MCF 10A (cell line): ENCODE measurements at regions of chr2 and their contacts with region 1.

Region 1: GRCh38 chr2:219229305-219230058 is at the starts of genes ANKZF1 and ATG9A:
- DNase-seq: peak; percentile 100
- H3K4me3 Mint-ChIP-seq: peak within 1 kb of the TSS; percentile 100
- H3K27ac Mint-ChIP-seq: peak within 1 kb of the TSS; percentile 99
- H3K4me1 Mint-ChIP-seq: peaks cover 12% of the 10 kb centered on the region
- H3K27me3 Mint-ChIP-seq: no peaks in the 10 kb centered on the region
- CTCF ChIP-seq: no peak
- total RNA-seq, gene ANKZF1: 45.5 and 45.6 TPM in 2 replicates
- total RNA-seq, gene ATG9A: 52.1 and 60.8 TPM in 2 replicates

Region 2: GRCh38 chr2:219160186-219161017 is 69.1 kb before region 1 on chr2 and contains the start of gene NHEJ1:
- CTCF ChIA-PET with region 1: interaction called, 12 read pairs
- POLR2A ChIA-PET with region 1: interaction called, 4 read pairs
- intact Hi-C with region 1: no loop called
- DNase-seq: peak; percentile 95
- H3K4me3 Mint-ChIP-seq: peak within 1 kb of the TSS; percentile 77
- H3K27ac Mint-ChIP-seq: peak within 1 kb of the TSS; percentile 37
- H3K4me1 Mint-ChIP-seq: peaks cover 14% of the 10 kb centered on the region
- H3K27me3 Mint-ChIP-seq: no peaks in the 10 kb centered on the region
- CTCF ChIP-seq: peak; percentile 96
- total RNA-seq, gene NHEJ1: 7.5 and 11.5 TPM in 2 replicates

Region 3: DNA sequence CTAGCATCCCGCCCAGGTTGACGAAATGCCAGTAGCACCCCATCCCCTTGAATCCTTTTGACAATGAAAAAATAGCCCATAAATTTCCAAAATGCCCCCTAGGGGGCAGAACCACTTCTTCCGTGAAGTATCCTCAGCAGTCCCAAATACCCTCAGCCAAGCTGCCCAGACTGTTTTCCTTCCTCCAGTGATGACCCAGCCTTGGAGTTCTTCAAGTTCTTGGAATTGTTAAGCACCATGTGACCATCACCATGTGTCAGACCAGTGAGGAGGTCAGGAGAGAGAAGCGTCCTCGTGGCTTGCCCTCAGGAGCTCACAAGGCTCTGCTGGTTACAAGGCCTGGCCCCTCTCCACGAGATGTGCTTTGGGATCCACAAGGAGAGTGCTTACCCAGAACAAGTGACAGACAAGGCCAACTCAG is 58.2 kb before region 1 on chr2:
- CTCF ChIA-PET with region 1: interaction called, 8 read pairs
- POLR2A ChIA-PET with region 1: interaction called, 93 read pairs
- intact Hi-C with region 1: no loop called
- DNase-seq: peak; percentile 57
- H3K4me3 Mint-ChIP-seq: no peak overlapping the region
- H3K27ac Mint-ChIP-seq: no peak overlapping the region
- H3K4me1 Mint-ChIP-seq: peaks cover 8% of the 10 kb centered on the region
- H3K27me3 Mint-ChIP-seq: no peaks in the 10 kb centered on the region
- CTCF ChIP-seq: peak; percentile 59

Region 4: GRCh38 chr2:219206442-219207253 is 22.8 kb before region 1 on chr2 and contains the start of gene ZFAND2B:
- CTCF ChIA-PET with region 1: no interaction called
- POLR2A ChIA-PET with region 1: interaction called, 28 read pairs
- intact Hi-C with region 1: no loop called
- DNase-seq: peak; percentile 93
- H3K4me3 Mint-ChIP-seq: peak within 1 kb of the TSS; percentile 88
- H3K27ac Mint-ChIP-seq: peak within 1 kb of the TSS; percentile 94
- H3K4me1 Mint-ChIP-seq: peaks cover 15% of the 10 kb centered on the region
- H3K27me3 Mint-ChIP-seq: no peaks in the 10 kb centered on the region
- CTCF ChIP-seq: no peak
- total RNA-seq, gene ZFAND2B: 61.0 and 73.1 TPM in 2 replicates

Region 5: DNA sequence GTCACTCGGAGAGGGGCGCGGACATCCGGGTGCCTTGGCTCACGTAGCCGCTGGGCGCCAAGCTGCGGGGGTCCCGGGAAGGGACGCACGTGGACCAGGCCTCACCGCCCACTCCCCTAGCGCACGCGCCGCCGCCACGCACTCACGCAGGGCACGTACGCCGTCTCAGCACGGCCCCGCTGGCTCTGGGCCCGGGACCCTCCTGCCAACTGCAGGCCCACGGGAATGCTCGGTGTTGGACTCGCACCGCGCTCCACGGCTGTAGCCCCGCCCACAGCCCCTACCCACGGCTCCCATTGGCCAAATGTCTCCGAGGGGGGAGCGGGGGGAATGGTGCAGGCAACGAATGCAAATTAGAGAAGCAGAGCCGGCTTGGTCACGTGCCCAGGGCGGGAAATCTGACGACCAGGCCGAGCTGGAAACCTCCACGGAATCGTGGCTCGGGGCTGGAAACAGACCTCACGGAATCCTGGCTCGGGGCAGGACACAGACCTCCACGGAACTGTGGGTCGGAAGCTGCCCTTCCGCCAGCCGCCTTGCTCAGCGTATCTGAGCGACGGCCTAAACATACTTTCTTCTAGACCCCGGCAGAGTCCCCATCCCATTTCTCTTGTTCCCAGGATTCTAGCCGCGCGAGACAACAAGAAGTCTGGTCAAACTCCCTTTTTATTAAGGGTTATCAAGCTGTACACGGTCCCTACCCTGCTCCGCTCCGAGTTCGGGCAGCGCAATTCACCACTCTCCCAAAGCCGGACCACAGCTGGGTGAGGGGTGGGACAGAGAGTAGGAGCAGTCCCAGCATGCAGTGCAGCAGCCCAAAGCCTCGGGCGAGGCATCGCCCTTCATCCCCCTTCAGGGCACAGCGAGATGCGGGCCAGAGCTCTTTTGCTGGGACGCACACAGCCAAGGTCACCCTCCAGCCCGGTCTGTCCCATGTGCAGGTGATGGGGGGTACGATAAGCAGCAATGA is 10.5 kb before region 1 on chr2 and contains the start of gene ABCB6:
- CTCF ChIA-PET with region 1: interaction called, 6 read pairs
- POLR2A ChIA-PET with region 1: interaction called, 127 read pairs
- intact Hi-C with region 1: no loop called
- DNase-seq: peak; percentile 91
- H3K4me3 Mint-ChIP-seq: peak within 1 kb of the TSS; percentile 82
- H3K27ac Mint-ChIP-seq: peak within 1 kb of the TSS; percentile 83
- H3K4me1 Mint-ChIP-seq: no peaks in the 10 kb centered on the region
- H3K27me3 Mint-ChIP-seq: no peaks in the 10 kb centered on the region
- CTCF ChIP-seq: no peak
- total RNA-seq, gene ABCB6: 13.8 and 18.8 TPM in 2 replicates

Region 6: DNA sequence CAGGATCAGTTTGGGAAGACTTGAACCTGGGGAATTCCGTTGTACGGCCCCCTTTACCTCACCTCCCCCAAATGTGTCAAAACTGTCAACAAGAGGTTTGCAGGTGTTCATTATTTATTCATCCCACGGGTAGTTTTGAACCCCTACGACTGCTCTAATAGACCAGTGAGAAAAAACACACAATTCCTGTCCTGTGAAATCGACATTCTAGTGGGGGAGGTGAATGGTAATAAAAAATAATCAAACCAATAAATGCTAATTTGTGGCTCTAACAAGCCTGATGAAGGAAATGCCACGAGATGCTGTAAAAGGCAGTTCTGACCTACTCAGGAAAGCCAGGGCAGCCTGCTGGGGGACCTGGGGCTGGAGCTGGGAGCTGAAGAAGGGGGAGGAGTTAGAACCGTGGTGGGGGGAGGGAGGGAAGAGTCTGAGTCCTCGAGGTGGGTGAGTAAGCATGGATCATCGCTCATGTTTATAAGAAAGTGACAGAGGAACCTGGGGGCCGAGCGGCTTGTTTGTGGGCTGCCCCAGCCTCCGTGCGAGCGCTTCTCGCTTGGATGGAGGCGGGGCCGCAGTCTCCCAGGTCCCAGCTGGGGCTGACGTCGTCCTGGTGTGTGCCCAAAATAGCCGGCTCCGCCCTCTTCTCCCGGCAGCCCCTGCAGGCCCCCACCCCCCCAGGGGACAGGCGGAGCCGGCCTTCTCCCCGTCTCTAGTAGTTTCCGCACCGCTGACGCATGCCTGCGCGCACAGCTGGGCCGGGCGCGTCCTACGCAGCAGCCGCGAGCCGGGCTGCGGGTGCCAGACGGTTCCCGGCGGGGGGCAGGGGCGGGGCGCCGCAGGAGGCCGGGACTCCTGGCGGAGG is 49.4 kb after region 1 on chr2 and contains the start of gene DNAJB2:
- CTCF ChIA-PET with region 1: interaction called, 7 read pairs
- POLR2A ChIA-PET with region 1: interaction called, 34 read pairs
- intact Hi-C with region 1: loop called (anchors 2 kb)
- DNase-seq: peak; percentile 97
- H3K4me3 Mint-ChIP-seq: peak within 1 kb of the TSS; percentile 86
- H3K27ac Mint-ChIP-seq: peak within 1 kb of the TSS; percentile 86
- H3K4me1 Mint-ChIP-seq: peaks cover 42% of the 10 kb centered on the region
- H3K27me3 Mint-ChIP-seq: no peaks in the 10 kb centered on the region
- CTCF ChIP-seq: no peak
- total RNA-seq, gene DNAJB2: 58.2 and 59.8 TPM in 2 replicates

Region 7: GRCh38 chr2:219285894-219286425 is 56.5 kb after region 1 on chr2:
- CTCF ChIA-PET with region 1: interaction called, 4 read pairs
- POLR2A ChIA-PET with region 1: interaction called, 34 read pairs
- intact Hi-C with region 1: no loop called
- DNase-seq: peak; percentile 68
- H3K4me3 Mint-ChIP-seq: peak overlapping the region; percentile 62
- H3K27ac Mint-ChIP-seq: peak overlapping the region; percentile 89
- H3K4me1 Mint-ChIP-seq: peaks cover 39% of the 10 kb centered on the region
- H3K27me3 Mint-ChIP-seq: no peaks in the 10 kb centered on the region
- CTCF ChIP-seq: no peak